Left colon (tissue), 2 donors: ENCODE measurements at regions of chr12 and their contacts with region 1.

Region 1: DNA sequence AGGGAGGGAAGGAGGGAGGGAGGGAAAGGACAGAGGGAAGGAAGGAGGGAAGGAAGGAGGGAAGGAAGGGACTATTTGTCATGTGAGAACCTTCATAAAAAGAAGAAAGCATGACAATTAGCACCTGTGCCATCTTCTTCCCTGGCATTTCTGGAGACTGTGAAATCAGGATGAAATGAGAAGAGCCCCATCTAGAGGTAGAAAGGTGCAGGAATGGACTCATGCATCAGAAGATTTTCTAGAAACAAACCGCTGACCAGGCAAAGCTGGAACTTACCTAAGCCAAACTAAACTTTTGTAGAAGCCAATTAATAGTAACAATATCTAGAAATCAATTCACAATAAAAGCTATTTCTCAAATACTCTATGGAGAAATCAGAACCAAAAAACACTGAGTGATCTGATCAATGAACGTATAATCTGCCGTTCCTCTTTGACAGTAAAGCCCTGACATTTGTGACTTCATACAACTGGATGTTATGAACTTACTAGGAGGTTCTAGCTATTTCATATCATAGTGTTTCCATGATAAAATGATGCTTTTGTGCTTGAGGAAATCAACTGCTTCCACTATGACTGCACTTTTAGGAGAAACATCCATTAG is 24.4 kb upstream of the CRACR2A start:
- DNase-seq: no peak
- ATAC-seq: peak; percentile 90

Region 2: GRCh38 chr12:3658327-3659163 is 118.8 kb before region 1 on chr12:
- intact Hi-C with region 1: loop called in 1 of 2 experiments (anchors 10 kb)
- DNase-seq: peak; percentile 33 to 45
- ATAC-seq: peak; percentile 56

Region 3: GRCh38 chr12:3837049-3837448 is 59.7 kb after region 1 on chr12:
- intact Hi-C with region 1: no loop called
- DNase-seq: no peak
- ATAC-seq: no peak